HepG2 (cell line): ENCODE measurements at regions of chr3 and their contacts with region 1.

Region 1: DNA sequence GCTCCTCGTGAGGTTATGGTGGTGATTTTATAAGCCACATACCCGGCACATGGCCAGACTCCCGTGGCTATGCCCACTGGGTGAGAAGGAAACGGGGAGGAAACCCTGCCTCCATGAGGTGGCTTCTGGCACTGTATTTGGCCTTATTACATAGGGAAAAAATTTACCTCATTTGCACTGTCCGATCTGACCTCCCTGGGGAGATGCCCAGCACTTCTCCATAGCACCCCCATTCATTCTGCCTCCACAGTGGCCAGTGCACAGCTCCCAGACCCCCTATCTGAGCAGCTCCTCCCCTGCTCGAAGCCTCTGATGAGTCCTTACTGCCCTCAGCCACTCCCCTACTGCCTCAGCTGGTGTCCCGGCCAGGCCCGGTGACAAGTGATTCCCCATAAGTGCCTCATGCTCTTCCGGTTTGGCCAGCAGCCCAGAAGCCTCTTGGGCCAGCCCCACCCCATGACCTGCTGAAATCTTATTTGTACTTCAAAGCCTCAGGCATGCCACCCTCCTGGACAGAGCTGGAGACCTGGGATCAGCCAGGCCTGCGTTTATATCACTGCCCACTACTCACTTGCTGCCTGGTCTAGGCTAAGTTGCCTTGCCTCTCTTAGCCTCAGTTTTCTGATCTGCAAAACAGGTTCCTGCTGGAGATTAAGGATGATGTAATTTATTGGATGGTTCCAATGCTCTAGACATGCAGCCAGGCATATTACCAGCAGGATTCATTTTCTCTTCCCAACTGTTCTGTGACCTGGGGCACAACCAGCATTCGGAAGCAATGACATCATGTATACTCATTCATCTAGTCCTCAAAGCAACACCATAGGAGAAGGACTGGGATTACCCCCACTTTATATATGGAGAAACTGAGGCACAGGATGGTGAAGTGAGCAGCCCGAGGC is 30.6 kb upstream of the SLC6A6 start:
- DNase-seq: peak; percentile 76
- ATAC-seq: peak; percentile 41
- H3K4me3 ChIP-seq: no peak overlapping the region
- H3K27ac ChIP-seq: no peak overlapping the region
- H3K4me1 ChIP-seq: peaks cover 38% of the 10 kb centered on the region
- H3K27me3 ChIP-seq: peaks cover 3 to 34% of the 10 kb centered on the region in 2 experiments; a peak in 3 of 5 replicates
- CTCF ChIP-seq: no peak
- EP300 ChIP-seq: no peak
- POLR2A ChIP-seq: no peak
- RAD21 ChIP-seq: no peak

Region 2: DNA sequence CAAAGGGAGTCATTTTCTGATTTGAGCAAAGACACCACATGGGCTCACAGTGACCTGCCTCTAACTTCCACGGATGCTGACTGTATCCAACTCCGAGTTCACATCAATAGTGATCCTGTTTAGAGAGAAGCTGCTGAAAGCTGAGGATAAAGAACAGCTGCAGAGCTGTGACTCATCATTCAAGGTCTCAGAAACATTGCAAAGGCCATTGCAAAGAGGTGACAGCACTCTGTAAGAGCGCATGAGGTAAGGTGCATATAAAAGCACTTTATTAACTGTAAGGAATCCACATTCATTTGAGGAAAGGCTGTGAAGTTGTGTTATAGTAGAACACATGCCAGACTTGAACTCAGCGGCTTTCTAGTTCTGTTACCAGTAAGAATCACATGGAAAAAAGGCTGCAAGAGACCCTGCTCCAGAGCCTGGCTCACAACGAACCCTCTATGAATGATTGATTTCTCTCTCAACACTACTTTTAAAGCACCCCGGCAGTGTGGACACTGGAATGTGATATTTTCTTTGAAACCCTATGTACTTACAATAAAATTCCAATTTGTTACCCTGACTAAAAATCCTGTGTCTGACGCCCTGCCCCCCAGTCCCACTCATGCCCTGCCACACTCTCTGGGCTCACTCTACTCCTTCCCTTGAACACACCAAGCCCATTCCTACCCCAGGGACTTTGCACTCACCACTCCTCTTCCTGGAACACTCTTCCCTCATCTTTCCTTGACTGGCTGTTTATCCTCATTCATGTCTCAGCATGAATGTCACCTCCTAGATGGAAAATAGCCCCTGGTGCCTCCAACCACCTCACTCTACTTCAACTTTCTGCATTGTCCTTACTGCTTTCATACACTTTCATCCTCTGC is 82.0 kb before region 1 on chr3:
- CTCF ChIA-PET with region 1: no interaction called
- POLR2A ChIA-PET with region 1: no interaction called
- in situ Hi-C with region 1: loop called (anchors 5 kb)
- intact Hi-C with region 1: no loop called
- DNase-seq: peak; percentile 59
- ATAC-seq: peak; percentile 92
- H3K4me3 ChIP-seq: no peak overlapping the region
- H3K27ac ChIP-seq: no peak overlapping the region
- H3K4me1 ChIP-seq: peaks cover 19% of the 10 kb centered on the region
- H3K27me3 ChIP-seq: peaks cover 3 to 24% of the 10 kb centered on the region in 2 experiments; a peak in 4 of 5 replicates
- CTCF ChIP-seq: no peak
- EP300 ChIP-seq: no peak
- POLR2A ChIP-seq: no peak
- RAD21 ChIP-seq: no peak

Region 3: GRCh38 chr3:14345308-14346150 is 26.3 kb before region 1 on chr3:
- CTCF ChIA-PET with region 1: no interaction called
- POLR2A ChIA-PET with region 1: no interaction called
- in situ Hi-C with region 1: no loop called
- intact Hi-C with region 1: no loop called
- DNase-seq: no peak
- ATAC-seq: peak; percentile 27; the same call in 2 of the 3 replicates
- H3K4me3 ChIP-seq: no peak overlapping the region
- H3K27ac ChIP-seq: no peak overlapping the region
- H3K4me1 ChIP-seq: no peaks in the 10 kb centered on the region
- H3K27me3 ChIP-seq: peaks cover 3 to 51% of the 10 kb centered on the region in 2 experiments; a peak in 4 of 5 replicates
- CTCF ChIP-seq: no peak
- EP300 ChIP-seq: no peak
- POLR2A ChIP-seq: no peak
- RAD21 ChIP-seq: no peak